Panc1 (cell line): ENCODE measurements at regions of chr2 and their contacts with region 1.

Region 1: GRCh38 chr2:191566344-191566743 is 111.6 kb upstream of the NABP1 start:
- DNase-seq: no peak
- ATAC-seq: peak; percentile 91
- H3K4me3 ChIP-seq: peak overlapping the region in 1 of 2 experiments; percentile 19; a peak in 1 of 4 replicates
- H3K27ac ChIP-seq: no peak overlapping the region
- H3K4me1 ChIP-seq: no peaks in the 10 kb centered on the region
- H3K27me3 ChIP-seq: no peaks in the 10 kb centered on the region
- CTCF ChIP-seq: peak; percentile 89

Region 2: DNA sequence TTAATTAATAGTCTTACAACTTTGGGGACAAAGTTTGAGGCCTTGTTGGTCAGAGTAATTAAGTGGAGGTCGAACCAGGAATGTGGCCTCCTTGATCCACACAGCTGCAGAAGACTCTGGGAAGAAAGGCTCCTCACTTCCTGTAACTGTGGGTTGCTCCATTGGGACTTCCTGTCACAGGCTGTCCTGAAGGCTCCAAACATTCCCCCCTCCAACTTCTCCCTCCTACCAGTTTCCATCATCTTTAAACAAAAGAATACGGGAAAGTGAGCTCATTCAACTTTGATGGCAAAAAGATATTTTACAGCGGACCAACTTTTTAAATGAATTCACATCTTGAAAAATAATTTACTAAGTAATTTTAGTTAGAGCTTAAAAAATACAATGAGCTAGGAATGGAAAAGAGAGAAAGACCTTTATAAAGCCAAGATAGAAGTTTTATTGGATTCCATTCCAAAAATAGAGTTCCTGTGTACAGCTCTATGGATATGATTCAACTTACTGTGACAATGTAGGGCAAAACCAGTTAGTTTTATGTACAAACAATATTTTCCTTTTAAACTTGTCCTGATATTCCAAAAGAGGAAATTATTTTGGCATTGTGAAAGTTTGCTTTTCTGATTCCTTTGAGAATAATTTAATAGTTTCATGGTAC is 100.5 kb before region 1 on chr2:
- CTCF ChIA-PET with region 1: no interaction called
- POLR2A ChIA-PET with region 1: no interaction called
- in situ Hi-C with region 1: no loop called
- intact Hi-C with region 1: no loop called
- DNase-seq: no peak
- ATAC-seq: no peak
- H3K4me3 ChIP-seq: no peak overlapping the region
- H3K27ac ChIP-seq: no peak overlapping the region
- H3K4me1 ChIP-seq: no peaks in the 10 kb centered on the region
- H3K27me3 ChIP-seq: no peaks in the 10 kb centered on the region
- CTCF ChIP-seq: no peak

Region 3: DNA sequence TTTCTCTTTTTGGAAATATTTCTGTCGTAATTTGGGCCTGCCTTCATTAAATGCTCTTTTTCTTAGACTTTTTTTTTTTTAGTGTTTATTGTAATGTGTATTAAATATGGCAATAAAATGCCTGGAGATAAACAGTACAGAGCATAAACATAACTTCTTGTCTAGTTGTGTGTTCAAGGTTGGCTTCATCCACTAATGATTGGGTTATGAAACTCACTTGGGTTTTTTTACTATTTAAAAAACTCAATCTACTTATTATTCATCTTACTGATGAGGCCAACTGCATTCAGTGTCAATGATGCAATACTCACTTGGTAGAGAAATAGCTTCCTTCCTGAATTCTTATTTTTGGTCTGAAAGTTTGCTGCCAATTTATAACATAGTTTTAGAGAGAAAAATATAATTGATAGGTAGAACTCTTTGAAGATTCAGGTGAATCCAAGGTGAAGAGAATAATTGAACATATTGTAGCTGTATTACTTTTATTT is 32.6 kb before region 1 on chr2:
- CTCF ChIA-PET with region 1: no interaction called
- POLR2A ChIA-PET with region 1: no interaction called
- in situ Hi-C with region 1: no loop called
- intact Hi-C with region 1: no loop called
- DNase-seq: no peak
- ATAC-seq: no peak
- H3K4me3 ChIP-seq: no peak overlapping the region
- H3K27ac ChIP-seq: no peak overlapping the region
- H3K4me1 ChIP-seq: no peaks in the 10 kb centered on the region
- H3K27me3 ChIP-seq: no peaks in the 10 kb centered on the region; the same call in 1 of the 2 replicates
- CTCF ChIP-seq: no peak

Region 4: DNA sequence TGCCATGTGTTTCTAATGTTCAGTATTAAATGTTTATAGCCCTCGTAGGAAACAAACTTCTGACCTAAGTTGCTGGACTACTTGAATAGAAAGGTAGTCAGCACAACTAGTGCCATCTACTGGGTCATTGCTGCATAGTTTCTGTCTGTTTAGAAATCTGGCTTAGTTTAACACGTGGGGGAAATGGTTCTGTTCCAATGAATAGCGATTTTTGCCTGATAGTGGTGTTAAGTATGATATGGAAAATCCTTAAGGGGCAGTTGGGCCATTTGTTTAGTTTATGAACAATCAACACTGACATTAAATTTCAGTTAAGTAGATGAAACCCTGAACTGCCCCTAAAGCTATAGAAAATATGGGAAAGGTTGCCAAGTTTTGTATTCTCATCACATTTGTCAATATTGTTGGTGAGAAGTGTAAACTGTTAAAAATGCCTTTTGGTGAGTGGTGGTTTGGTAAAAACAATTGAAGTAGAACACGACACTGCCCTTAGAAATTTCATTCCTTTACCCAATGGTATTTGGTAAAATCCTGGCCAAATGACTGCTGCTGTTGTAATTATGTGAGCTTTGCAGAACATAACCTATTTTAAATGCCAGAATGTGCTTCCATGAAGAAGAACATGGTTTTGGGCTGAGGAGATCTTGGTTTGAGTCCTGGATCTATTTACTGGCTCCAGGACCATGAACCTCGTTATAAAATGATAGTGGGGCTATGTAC is 124.8 kb after region 1 on chr2:
- CTCF ChIA-PET with region 1: interaction called, 4 read pairs
- POLR2A ChIA-PET with region 1: no interaction called
- in situ Hi-C with region 1: loop called (anchors 25 kb)
- intact Hi-C with region 1: loop called (anchors 1 kb)
- DNase-seq: no peak
- ATAC-seq: peak; percentile 76
- H3K4me3 ChIP-seq: no peak overlapping the region
- H3K27ac ChIP-seq: no peak overlapping the region
- H3K4me1 ChIP-seq: peaks cover 23% of the 10 kb centered on the region; the same call in 1 of the 2 replicates
- H3K27me3 ChIP-seq: no peaks in the 10 kb centered on the region
- CTCF ChIP-seq: peak; percentile 75; the same call in 1 of the 2 replicates

Region 5: GRCh38 chr2:191800874-191801273 is 234.5 kb after region 1 on chr2:
- CTCF ChIA-PET with region 1: no interaction called
- POLR2A ChIA-PET with region 1: no interaction called
- in situ Hi-C with region 1: no loop called
- intact Hi-C with region 1: loop called (anchors 5 kb)
- DNase-seq: no peak
- ATAC-seq: no peak
- H3K4me3 ChIP-seq: no peak overlapping the region
- H3K27ac ChIP-seq: no peak overlapping the region
- H3K4me1 ChIP-seq: no peaks in the 10 kb centered on the region
- H3K27me3 ChIP-seq: no peaks in the 10 kb centered on the region
- CTCF ChIP-seq: no peak